ENCODE measurements at regions of chr16 and their contacts with region 1.

Region 1: GRCh38 chr16:53111078-53111791 is 56.4 kb downstream of the CHD9 start:
- DNase-seq: no peak
- H3K4me3 ChIP-seq: no peak overlapping the region
- H3K27ac ChIP-seq: peak overlapping the region in 1 of 4 donors; percentile 45
- H3K4me1 ChIP-seq: peaks cover 0 to 36% (median 7%) of the 10 kb centered on the region in 3 donors
- H3K27me3 ChIP-seq: no peaks in the 10 kb centered on the region
- CTCF ChIP-seq: no peak
- POLR2A ChIP-seq: no peak

Region 2: GRCh38 chr16:52976539-52977167 is 134.6 kb before region 1 on chr16:
- intact Hi-C with region 1: no loop called
- DNase-seq: no peak
- H3K4me3 ChIP-seq: no peak overlapping the region
- H3K27ac ChIP-seq: no peak overlapping the region
- H3K4me1 ChIP-seq: no peaks in the 10 kb centered on the region
- H3K27me3 ChIP-seq: peaks cover 0 to 4% (median 0%) of the 10 kb centered on the region in 4 donors
- CTCF ChIP-seq: peak in 4 of 6 experiments; percentile 23 to 50 (median 26)
- POLR2A ChIP-seq: no peak

Region 3: DNA sequence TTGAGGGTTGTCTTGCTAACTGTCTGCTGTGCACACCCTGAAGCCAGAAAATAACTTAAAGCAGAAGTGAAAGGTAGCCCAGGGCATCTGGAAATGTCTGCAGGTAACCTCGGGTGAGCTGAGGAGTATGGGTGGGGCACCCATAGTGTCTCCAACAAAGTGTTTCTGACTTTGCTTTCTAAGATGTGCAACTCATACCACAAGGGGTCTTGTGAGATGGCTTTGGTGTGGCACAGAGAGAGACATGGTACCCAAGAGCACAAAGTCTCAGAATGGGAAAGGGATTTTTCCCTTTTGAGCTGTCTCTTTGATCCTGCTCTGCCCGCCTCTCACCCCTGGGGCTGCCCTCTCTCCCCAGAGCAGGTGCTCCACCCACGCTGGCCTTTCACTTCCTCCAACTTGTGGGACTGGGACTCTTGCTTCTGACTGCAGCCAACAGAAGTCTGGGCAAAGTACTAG is 49.5 kb before region 1 on chr16:
- intact Hi-C with region 1: loop called (anchors 10 kb)
- DNase-seq: no peak
- H3K4me3 ChIP-seq: no peak overlapping the region
- H3K27ac ChIP-seq: peak overlapping the region; percentile 7 to 48 (median 24)
- H3K4me1 ChIP-seq: peaks cover 6 to 69% (median 15%) of the 10 kb centered on the region in 3 donors
- H3K27me3 ChIP-seq: no peaks in the 10 kb centered on the region
- CTCF ChIP-seq: peak in 1 of 6 experiments; percentile 0
- POLR2A ChIP-seq: no peak

Region 4: GRCh38 chr16:53323924-53324323 is 212.7 kb after region 1 on chr16:
- intact Hi-C with region 1: no loop called
- DNase-seq: no peak
- H3K4me3 ChIP-seq: no peak overlapping the region
- H3K27ac ChIP-seq: no peak overlapping the region
- H3K4me1 ChIP-seq: no peaks in the 10 kb centered on the region
- H3K27me3 ChIP-seq: no peaks in the 10 kb centered on the region
- CTCF ChIP-seq: no peak
- POLR2A ChIP-seq: no peak

Measured in esophagus squamous epithelium (tissue), 5 donors.